Right cardiac atrium (tissue), 5 donors: ENCODE measurements at regions of chr19 and their contacts with region 1.

Region 1: DNA sequence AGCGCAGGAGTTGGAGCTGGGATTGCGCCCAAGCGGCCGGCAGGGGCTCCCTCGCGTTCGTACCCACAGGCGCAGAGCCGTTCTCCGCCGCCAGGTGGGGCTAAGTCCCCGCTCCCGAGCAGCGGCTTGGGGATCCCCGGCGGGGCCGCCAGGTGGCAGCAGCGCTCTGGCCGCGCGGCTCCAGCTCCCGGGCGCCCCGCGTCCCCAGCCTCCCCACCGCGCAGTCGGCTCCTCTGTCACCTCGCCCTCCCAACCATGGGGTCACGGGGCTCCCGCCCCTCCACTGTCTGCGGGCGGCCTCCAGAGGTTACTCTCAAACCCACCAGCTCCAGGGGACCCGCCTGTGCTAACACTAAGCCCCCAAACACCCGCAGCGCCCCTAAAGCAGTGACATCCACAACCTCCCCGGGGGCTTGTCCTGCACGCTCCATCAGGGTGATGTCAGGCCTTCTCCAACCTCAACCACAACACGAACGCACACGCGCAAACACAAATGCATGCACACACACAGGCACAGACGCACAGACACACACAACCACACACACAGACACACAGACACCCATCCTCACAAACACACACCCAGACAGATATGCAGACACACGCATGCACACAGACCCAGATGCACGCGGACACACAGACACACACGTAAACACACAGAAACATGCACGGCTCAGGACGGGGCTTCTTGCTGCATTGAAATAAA is 18.4 kb upstream of the KCTD15 start:
- DNase-seq: peak; percentile 83 to 95 (median 94)
- ATAC-seq: peak; percentile 85
- H3K4me3 ChIP-seq: no peak overlapping the region
- H3K27ac ChIP-seq: no peak overlapping the region
- H3K4me1 ChIP-seq: peaks cover 2% of the 10 kb centered on the region
- H3K27me3 ChIP-seq: no peaks in the 10 kb centered on the region

Region 2: DNA sequence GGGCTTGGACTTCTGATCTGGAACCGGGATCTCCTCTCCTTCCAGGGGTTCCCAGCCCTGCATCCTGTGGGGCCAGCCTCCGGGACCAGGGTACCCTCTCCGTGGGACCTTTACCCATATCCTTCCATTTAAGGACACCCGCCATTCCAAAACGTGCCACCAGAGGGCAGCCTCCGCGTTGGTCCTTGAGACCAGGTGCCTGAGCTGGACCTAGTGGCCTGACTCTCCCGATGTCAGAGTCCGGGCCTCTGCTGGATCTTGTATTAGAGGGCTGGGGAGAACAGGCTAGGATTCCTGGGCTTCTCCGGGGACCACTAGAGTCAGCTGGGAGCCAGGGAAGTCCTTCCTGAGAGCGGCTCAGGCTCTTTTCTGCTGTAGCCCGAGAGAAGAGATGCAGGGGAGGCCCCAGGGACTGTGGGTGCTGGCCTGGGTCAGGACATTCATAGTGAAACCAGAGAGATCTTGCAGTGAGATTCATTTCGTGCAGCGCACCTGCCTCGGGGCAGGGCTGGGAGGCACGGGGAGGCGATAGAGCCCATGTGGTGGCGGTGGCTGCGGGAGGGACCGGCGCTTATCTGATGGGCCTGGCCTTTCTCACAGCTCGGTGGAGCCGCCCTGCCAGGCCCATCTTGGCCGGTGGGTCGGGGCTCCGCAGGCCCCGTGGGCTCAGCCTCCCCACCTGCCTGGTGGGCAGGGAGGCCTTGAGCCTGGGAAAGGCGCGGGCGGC is 542.8 kb before region 1 on chr19:
- intact Hi-C with region 1: loop called in 2 of 4 experiments (anchors 5 to 10 kb)
- DNase-seq: peak; percentile 76 to 93 (median 91)
- ATAC-seq: peak; percentile 62 to 71
- H3K4me3 ChIP-seq: no peak overlapping the region
- H3K27ac ChIP-seq: no peak overlapping the region
- H3K4me1 ChIP-seq: no peaks in the 10 kb centered on the region
- H3K27me3 ChIP-seq: no peaks in the 10 kb centered on the region

Region 3: GRCh38 chr19:33998739-33999345 is 220.6 kb after region 1 on chr19:
- intact Hi-C with region 1: loop called in 3 of 4 experiments (anchors 2 to 5 kb)
- DNase-seq: no peak
- ATAC-seq: no peak
- H3K4me3 ChIP-seq: no peak overlapping the region
- H3K27ac ChIP-seq: no peak overlapping the region
- H3K4me1 ChIP-seq: no peaks in the 10 kb centered on the region
- H3K27me3 ChIP-seq: peaks cover under 1% of the 10 kb centered on the region

Region 4: DNA sequence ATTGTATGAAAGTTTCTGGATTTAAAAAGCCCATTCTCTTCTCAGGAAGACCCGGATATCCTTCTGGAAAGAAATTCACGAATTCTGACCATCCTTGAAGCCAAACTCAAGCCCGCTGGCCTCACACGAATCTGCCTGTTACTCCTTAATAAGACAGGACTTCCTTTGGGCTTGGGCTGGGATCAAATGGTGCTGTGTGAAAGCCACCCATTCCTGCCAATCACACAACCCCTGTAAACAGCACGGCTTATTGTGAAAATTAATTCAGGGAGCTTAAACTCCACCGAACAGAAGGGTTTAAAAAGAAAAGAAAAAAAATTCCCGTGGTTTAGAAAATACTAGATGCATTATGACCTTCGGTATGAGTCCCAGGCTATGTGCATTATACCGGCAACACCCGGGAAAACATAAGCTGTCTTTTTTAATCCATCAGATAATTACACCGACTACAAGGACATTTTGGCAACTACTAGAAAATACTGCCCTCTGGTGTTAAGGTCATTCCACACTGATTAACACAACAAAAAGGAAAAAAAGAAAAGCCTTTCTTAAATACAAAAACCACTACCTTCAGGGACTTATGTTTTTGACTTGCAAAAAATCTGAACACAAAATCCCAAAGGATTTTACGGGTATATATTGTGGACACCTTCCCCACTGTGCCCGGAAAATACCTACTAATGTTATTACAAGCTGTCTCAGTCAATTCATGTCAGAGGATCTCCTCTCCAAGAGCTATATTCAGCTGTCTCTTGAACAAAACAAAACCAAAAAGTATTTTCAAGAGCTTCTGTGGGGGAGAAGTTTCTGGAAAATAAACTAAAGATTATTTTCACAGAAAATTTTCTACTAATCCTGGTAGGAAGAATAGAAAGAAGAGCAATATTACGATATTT is 318.0 kb after region 1 on chr19:
- intact Hi-C with region 1: loop called (anchors 2 to 10 kb)
- DNase-seq: no peak
- ATAC-seq: peak; percentile 33 to 64
- H3K4me3 ChIP-seq: peak overlapping the region; percentile 2
- H3K27ac ChIP-seq: no peak overlapping the region
- H3K4me1 ChIP-seq: no peaks in the 10 kb centered on the region
- H3K27me3 ChIP-seq: no peaks in the 10 kb centered on the region

Region 5: GRCh38 chr19:34145741-34146202 is 367.5 kb after region 1 on chr19:
- intact Hi-C with region 1: loop called (anchors 5 kb)
- DNase-seq: peak in 1 of 3 donors; percentile 29
- ATAC-seq: peak in 1 of 2 donors; percentile 61
- H3K4me3 ChIP-seq: no peak overlapping the region
- H3K27ac ChIP-seq: no peak overlapping the region
- H3K4me1 ChIP-seq: no peaks in the 10 kb centered on the region
- H3K27me3 ChIP-seq: no peaks in the 10 kb centered on the region